Common myeloid progenitor, CD34-positive (primary cell): ENCODE measurements at regions of chr1 and their contacts with region 1.

Region 1: DNA sequence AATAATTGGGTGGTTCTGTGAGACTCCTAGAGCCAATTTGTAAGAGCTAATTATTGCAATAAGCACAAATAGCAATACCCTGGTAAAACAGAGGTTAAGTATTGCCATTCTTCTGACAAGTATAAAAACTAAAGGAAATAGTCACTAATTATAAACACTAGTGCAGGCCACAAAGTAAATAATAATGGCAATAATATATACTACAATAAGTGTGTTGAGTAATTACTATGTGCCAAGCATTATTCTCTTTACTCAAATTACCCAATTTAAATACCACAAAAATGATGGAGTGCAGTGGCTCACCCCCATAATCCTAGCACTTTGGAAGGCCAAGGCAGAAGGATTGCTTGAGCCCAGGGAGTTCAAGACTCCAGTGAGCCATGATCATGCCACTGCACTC is 15.3 kb downstream of the ZMYM6 start:
- DNase-seq: no peak
- H3K4me3 ChIP-seq: no peak overlapping the region
- H3K27ac ChIP-seq: no peak overlapping the region
- H3K4me1 ChIP-seq: no peaks in the 10 kb centered on the region
- H3K27me3 ChIP-seq: no peaks in the 10 kb centered on the region

Region 2: DNA sequence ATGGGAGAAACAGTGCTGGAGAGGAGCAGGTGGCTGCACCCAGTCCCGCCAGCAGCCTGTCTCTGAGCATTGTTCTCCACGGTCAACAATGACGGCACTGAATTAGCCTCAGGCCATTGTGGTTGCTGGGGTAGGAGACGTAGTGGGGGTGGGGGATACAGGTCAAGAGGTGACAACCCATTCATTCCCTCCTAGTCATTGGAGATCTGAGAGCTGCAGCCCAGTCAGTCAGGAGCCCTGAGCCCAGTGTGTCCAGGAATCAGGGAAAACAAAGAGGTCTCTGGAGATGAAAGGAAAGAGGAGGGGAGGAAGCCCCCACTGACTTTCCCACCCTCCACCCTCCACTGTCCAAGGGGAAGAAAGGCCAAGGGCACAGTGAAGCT is 172.2 kb before region 1 on chr1:
- CTCF ChIA-PET with region 1: no interaction called
- POLR2A ChIA-PET with region 1: no interaction called
- DNase-seq: no peak
- H3K4me3 ChIP-seq: no peak overlapping the region
- H3K27ac ChIP-seq: no peak overlapping the region
- H3K4me1 ChIP-seq: peaks cover 0 to 47% (median 2%) of the 10 kb centered on the region in 4 experiments
- H3K27me3 ChIP-seq: no peaks in the 10 kb centered on the region

Region 3: GRCh38 chr1:35247256-35247655 is 230.8 kb after region 1 on chr1:
- CTCF ChIA-PET with region 1: no interaction called
- POLR2A ChIA-PET with region 1: interaction called, 11 read pairs
- DNase-seq: peak in 1 of 3 donors; percentile 3
- H3K4me3 ChIP-seq: no peak overlapping the region
- H3K27ac ChIP-seq: no peak overlapping the region
- H3K4me1 ChIP-seq: peaks cover 0 to 5% (median 0%) of the 10 kb centered on the region in 4 experiments
- H3K27me3 ChIP-seq: no peaks in the 10 kb centered on the region